ENCODE measurements at regions of chr1 and their contacts with region 1.

Region 1: DNA sequence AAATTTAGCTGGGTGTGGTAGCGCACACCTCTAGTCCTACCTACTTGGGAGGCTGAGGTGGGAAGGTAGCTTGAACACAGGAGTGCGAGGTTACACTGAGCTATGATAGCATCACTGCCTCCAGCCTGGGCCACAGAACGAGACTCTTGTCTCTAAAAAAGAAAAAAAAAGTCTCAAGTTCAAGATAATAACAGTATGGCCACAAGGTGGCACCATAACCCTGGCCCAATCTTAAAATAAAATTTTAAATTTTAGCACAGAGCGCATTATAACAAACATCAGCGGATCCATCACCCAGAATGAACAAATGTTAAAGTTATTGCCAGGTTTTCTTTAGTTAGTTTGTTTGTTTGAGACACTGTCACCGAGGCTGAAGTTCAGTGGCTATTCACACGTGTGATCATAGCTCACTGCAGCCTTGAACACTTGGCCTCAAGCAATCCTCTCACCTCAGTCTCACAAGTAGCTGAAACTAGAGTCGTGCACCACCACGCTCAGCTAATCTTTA is 2.9 kb upstream of the HTR6 start:
- DNase-seq: peak in 3 of 7 donors; percentile 58 to 64 (median 61)
- H3K4me3 ChIP-seq: no peak overlapping the region
- H3K27ac ChIP-seq: no peak overlapping the region
- H3K4me1 ChIP-seq: peaks cover 2 to 3% of the 10 kb centered on the region in 2 donors
- H3K27me3 ChIP-seq: peaks cover 30% of the 10 kb centered on the region
- CTCF ChIP-seq: peak; percentile 58 to 80 (median 67)
- POLR2A ChIP-seq: no peak

Region 2: GRCh38 chr1:19704247-19705113 is 42.7 kb after region 1 on chr1:
- intact Hi-C with region 1: loop called (anchors 2 to 5 kb)
- DNase-seq: peak; percentile 71 to 88 (median 80)
- H3K4me3 ChIP-seq: no peak overlapping the region
- H3K27ac ChIP-seq: no peak overlapping the region
- H3K4me1 ChIP-seq: peaks cover 0 to 8% of the 10 kb centered on the region in 2 donors
- H3K27me3 ChIP-seq: no peaks in the 10 kb centered on the region
- CTCF ChIP-seq: peak; percentile 75 to 94 (median 88)
- POLR2A ChIP-seq: no peak

Measured in adrenal gland (tissue), 19 donors.